CD4-positive, alpha-beta memory T cell (primary cell): ENCODE measurements at regions of chr2 and their contacts with region 1.

Region 1: GRCh38 chr2:46650556-46651001 is 171.2 kb downstream of the TMEM247 start:
- DNase-seq: peak; percentile 66 to 74 (median 73)
- H3K4me3 ChIP-seq: no peak overlapping the region
- H3K4me3 Mint-ChIP-seq: no peak overlapping the region
- H3K27ac ChIP-seq: no peak overlapping the region
- H3K27ac Mint-ChIP-seq: no peak overlapping the region
- H3K4me1 ChIP-seq: no peaks in the 10 kb centered on the region
- H3K4me1 Mint-ChIP-seq: no peaks in the 10 kb centered on the region
- H3K27me3 ChIP-seq: no peaks in the 10 kb centered on the region
- H3K27me3 Mint-ChIP-seq: no peaks in the 10 kb centered on the region

Region 2: DNA sequence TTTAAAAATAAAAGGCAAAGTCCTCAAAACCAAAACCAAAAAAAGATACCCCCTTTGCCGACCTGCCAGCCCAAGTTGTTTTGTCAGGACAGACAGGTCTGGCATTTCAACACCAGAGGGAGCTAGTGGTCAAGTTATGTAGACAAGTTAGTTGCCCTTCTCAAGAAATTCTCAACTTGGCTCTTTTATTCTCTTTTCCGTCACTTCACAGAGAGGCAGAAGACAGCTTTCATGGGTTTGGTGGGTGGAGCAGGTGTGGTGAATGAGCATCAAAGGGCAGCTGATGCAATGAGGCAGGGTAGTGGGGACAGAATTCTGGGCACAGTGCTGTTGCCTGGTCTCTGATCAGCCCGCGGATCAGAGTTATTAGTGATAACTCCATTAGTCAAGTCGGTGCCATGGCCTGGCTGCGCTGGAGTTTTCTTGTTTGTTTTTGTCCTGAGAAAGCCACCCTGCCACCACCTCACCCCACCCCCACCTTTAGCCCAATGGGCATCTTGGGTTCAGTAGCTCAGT is 657.0 kb before region 1 on chr2:
- CTCF ChIA-PET with region 1: interaction called, 3 read pairs
- POLR2A ChIA-PET with region 1: no interaction called
- intact Hi-C with region 1: loop called (anchors 1 kb)
- DNase-seq: peak; percentile 50 to 61 (median 54)
- H3K4me3 ChIP-seq: no peak overlapping the region
- H3K4me3 Mint-ChIP-seq: no peak overlapping the region
- H3K27ac ChIP-seq: no peak overlapping the region
- H3K27ac Mint-ChIP-seq: no peak overlapping the region
- H3K4me1 ChIP-seq: no peaks in the 10 kb centered on the region
- H3K4me1 Mint-ChIP-seq: peaks cover 2 to 6% (median 4%) of the 10 kb centered on the region in 4 donors
- H3K27me3 ChIP-seq: no peaks in the 10 kb centered on the region
- H3K27me3 Mint-ChIP-seq: no peaks in the 10 kb centered on the region

Region 3: GRCh38 chr2:46010925-46011490 is 639.6 kb before region 1 on chr2:
- CTCF ChIA-PET with region 1: no interaction called
- POLR2A ChIA-PET with region 1: no interaction called
- intact Hi-C with region 1: loop called (anchors 1 kb)
- DNase-seq: peak in 4 of 5 donors; percentile 21 to 35 (median 30)
- H3K4me3 ChIP-seq: no peak overlapping the region
- H3K4me3 Mint-ChIP-seq: no peak overlapping the region
- H3K27ac ChIP-seq: no peak overlapping the region
- H3K27ac Mint-ChIP-seq: no peak overlapping the region
- H3K4me1 ChIP-seq: no peaks in the 10 kb centered on the region
- H3K4me1 Mint-ChIP-seq: no peaks in the 10 kb centered on the region
- H3K27me3 ChIP-seq: no peaks in the 10 kb centered on the region
- H3K27me3 Mint-ChIP-seq: no peaks in the 10 kb centered on the region

Region 4: GRCh38 chr2:46470114-46470628 is 180.4 kb before region 1 on chr2:
- CTCF ChIA-PET with region 1: interaction called, 13 read pairs
- POLR2A ChIA-PET with region 1: no interaction called
- intact Hi-C with region 1: no loop called
- DNase-seq: no peak
- H3K4me3 ChIP-seq: no peak overlapping the region
- H3K4me3 Mint-ChIP-seq: no peak overlapping the region
- H3K27ac ChIP-seq: no peak overlapping the region
- H3K27ac Mint-ChIP-seq: peak overlapping the region in 2 of 7 donors; percentile 21 to 31
- H3K4me1 ChIP-seq: no peaks in the 10 kb centered on the region
- H3K4me1 Mint-ChIP-seq: peaks cover 0 to 5% (median 2%) of the 10 kb centered on the region in 4 donors
- H3K27me3 ChIP-seq: no peaks in the 10 kb centered on the region
- H3K27me3 Mint-ChIP-seq: no peaks in the 10 kb centered on the region

Region 5: DNA sequence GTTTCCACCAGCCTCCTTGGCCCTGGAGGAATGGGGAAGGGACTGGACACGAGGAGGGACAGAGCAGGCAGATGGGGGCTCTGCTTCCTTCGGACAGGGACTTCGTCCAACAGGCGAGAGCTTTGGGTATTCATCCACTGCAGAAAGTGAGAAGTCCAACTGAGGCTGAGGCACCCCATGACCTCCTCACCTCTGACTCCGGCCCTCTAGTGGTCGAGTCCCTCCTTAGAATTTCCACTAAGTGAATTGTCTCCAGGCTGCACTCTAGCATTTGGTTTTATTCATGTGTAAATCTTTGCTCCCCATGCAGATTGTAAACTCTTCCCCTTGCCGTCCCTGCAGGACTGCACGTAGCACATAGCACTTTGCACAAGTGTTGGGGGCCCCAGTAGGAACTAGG is 95.6 kb before region 1 on chr2:
- CTCF ChIA-PET with region 1: interaction called, 14 read pairs
- POLR2A ChIA-PET with region 1: no interaction called
- intact Hi-C with region 1: no loop called
- DNase-seq: peak in 1 of 5 donors; percentile 19
- H3K4me3 ChIP-seq: no peak overlapping the region
- H3K4me3 Mint-ChIP-seq: no peak overlapping the region
- H3K27ac ChIP-seq: no peak overlapping the region
- H3K27ac Mint-ChIP-seq: no peak overlapping the region
- H3K4me1 ChIP-seq: no peaks in the 10 kb centered on the region
- H3K4me1 Mint-ChIP-seq: peaks cover 16 to 45% (median 25%) of the 10 kb centered on the region in 4 donors
- H3K27me3 ChIP-seq: no peaks in the 10 kb centered on the region
- H3K27me3 Mint-ChIP-seq: no peaks in the 10 kb centered on the region

Region 6: DNA sequence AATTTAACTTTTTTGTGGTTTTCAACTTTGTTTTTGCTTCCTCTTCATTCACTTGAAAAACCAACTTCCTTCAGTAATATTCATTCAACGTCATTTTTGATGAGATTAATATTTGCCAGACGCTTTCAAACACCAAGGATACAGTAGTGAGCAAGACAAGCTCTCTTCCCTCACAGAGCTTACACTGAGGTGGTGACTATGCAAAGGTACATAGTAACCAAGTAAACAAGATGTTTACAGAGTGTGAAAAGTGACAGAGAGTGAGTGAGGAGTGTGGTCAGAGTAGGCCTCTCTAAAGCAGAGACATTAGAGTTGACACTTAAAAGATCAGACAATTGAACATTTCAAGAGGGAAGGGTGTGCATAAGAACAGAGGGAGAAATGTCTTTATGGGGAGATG is 15.7 kb before region 1 on chr2:
- CTCF ChIA-PET with region 1: interaction called, 21 read pairs
- POLR2A ChIA-PET with region 1: no interaction called
- intact Hi-C with region 1: no loop called
- DNase-seq: peak in 4 of 5 donors; percentile 20 to 40 (median 28)
- H3K4me3 ChIP-seq: no peak overlapping the region
- H3K4me3 Mint-ChIP-seq: peak overlapping the region in 2 of 8 donors; percentile 2 to 17
- H3K27ac ChIP-seq: no peak overlapping the region
- H3K27ac Mint-ChIP-seq: peak overlapping the region in 6 of 7 donors; percentile 25 to 89 (median 72)
- H3K4me1 ChIP-seq: peaks cover 9% of the 10 kb centered on the region
- H3K4me1 Mint-ChIP-seq: peaks cover 10 to 12% (median 10%) of the 10 kb centered on the region in 4 donors
- H3K27me3 ChIP-seq: no peaks in the 10 kb centered on the region
- H3K27me3 Mint-ChIP-seq: no peaks in the 10 kb centered on the region

Region 7: DNA sequence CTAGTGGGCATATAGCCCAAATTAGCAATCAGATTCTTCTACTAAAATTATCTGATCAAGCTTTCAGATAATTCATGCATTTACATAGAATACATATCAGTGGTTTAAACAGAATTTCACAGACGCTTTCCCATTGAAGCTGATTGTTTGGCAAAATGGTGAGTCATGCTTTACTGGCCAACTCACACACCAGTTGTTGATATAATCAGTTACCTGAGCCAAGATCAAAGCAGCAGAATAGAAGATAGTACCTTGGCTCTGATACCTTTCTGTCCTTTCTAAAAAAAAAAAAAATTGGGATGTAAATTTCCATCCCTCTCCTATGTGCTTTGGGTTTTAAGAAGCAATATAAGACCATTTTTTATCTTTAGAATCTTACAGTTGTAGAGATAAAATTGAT is 87.0 kb after region 1 on chr2:
- CTCF ChIA-PET with region 1: no interaction called
- POLR2A ChIA-PET with region 1: no interaction called
- intact Hi-C with region 1: no loop called
- DNase-seq: no peak
- H3K4me3 ChIP-seq: no peak overlapping the region
- H3K4me3 Mint-ChIP-seq: no peak overlapping the region
- H3K27ac ChIP-seq: no peak overlapping the region
- H3K27ac Mint-ChIP-seq: no peak overlapping the region
- H3K4me1 ChIP-seq: peaks cover 4% of the 10 kb centered on the region
- H3K4me1 Mint-ChIP-seq: peaks cover 22 to 31% (median 30%) of the 10 kb centered on the region in 4 donors
- H3K27me3 ChIP-seq: no peaks in the 10 kb centered on the region
- H3K27me3 Mint-ChIP-seq: no peaks in the 10 kb centered on the region

Region 8: GRCh38 chr2:46887028-46887885 is 236.7 kb after region 1 on chr2:
- CTCF ChIA-PET with region 1: interaction called, 3 read pairs
- POLR2A ChIA-PET with region 1: no interaction called
- intact Hi-C with region 1: loop called (anchors 5 kb)
- DNase-seq: no peak
- H3K4me3 ChIP-seq: no peak overlapping the region
- H3K4me3 Mint-ChIP-seq: no peak overlapping the region
- H3K27ac ChIP-seq: no peak overlapping the region
- H3K27ac Mint-ChIP-seq: peak overlapping the region in 2 of 7 donors; percentile 25 to 74
- H3K4me1 ChIP-seq: no peaks in the 10 kb centered on the region
- H3K4me1 Mint-ChIP-seq: no peaks in the 10 kb centered on the region
- H3K27me3 ChIP-seq: no peaks in the 10 kb centered on the region
- H3K27me3 Mint-ChIP-seq: peaks cover 1 to 7% of the 10 kb centered on the region in 2 donors